Breast epithelium (tissue), 4 donors: ENCODE measurements at regions of chr2 and their contacts with region 1.

Region 1: DNA sequence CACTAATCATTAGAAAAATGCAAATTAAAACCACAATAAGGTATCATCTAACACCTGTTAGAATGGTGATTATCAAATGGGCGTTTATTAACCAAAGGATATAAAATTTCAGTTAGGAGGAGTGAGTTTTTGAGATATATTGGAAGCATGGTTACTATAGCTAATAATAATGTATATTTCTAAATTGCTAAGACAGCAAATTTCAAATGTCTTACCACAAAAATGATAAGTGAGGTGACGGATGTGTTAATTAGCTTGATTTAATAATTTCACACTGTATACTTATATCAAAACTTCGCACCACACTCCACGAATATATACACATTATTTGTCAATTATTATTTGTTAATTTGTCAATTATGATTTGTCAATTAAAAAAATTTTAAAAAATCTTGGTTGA is 227.2 kb upstream of the DDX18 start:
- DNase-seq: no peak
- H3K4me3 ChIP-seq: no peak overlapping the region
- H3K27ac ChIP-seq: no peak overlapping the region
- H3K4me1 ChIP-seq: no peaks in the 10 kb centered on the region
- H3K27me3 ChIP-seq: no peaks in the 10 kb centered on the region
- CTCF ChIP-seq: no peak
- POLR2A ChIP-seq: no peak

Region 2: GRCh38 chr2:116167107-116167506 is 1420.2 kb before region 1 on chr2:
- intact Hi-C with region 1: loop called (anchors 5 kb)
- DNase-seq: no peak
- H3K4me3 ChIP-seq: no peak overlapping the region
- H3K27ac ChIP-seq: no peak overlapping the region
- H3K4me1 ChIP-seq: no peaks in the 10 kb centered on the region
- H3K27me3 ChIP-seq: no peaks in the 10 kb centered on the region
- CTCF ChIP-seq: no peak
- POLR2A ChIP-seq: no peak

Region 3: GRCh38 chr2:117555965-117556364 is 31.3 kb before region 1 on chr2:
- intact Hi-C with region 1: no loop called
- DNase-seq: no peak
- H3K4me3 ChIP-seq: no peak overlapping the region
- H3K27ac ChIP-seq: no peak overlapping the region
- H3K4me1 ChIP-seq: no peaks in the 10 kb centered on the region
- H3K27me3 ChIP-seq: no peaks in the 10 kb centered on the region
- CTCF ChIP-seq: no peak
- POLR2A ChIP-seq: no peak